Right ventricle myocardium inferior (tissue), 1 donor: ENCODE measurements at regions of chr6 and their contacts with region 1.

Region 1: GRCh38 chr6:110815217-110816109 is at the start of gene CDK19:
- DNase-seq: peak; percentile 100
- ATAC-seq: peak; percentile 98
- total RNA-seq, gene CDK19: 11.5 TPM

Region 2: GRCh38 chr6:110415086-110415916 is 400.2 kb before region 1 on chr6 and contains the start of gene DDO:
- intact Hi-C with region 1: loop called (anchors 1 kb)
- DNase-seq: peak; percentile 86
- ATAC-seq: peak; percentile 93
- total RNA-seq, gene DDO: 29.7 TPM

Region 3: GRCh38 chr6:110873981-110874879 is 58.8 kb after region 1 on chr6 and contains the start of gene AMD1:
- intact Hi-C with region 1: loop called (anchors 1 kb)
- DNase-seq: peak; percentile 99
- ATAC-seq: peak; percentile 91
- total RNA-seq, gene AMD1: 84.9 TPM